ENCODE measurements at regions of chr17 and their contacts with region 1.

Region 1: DNA sequence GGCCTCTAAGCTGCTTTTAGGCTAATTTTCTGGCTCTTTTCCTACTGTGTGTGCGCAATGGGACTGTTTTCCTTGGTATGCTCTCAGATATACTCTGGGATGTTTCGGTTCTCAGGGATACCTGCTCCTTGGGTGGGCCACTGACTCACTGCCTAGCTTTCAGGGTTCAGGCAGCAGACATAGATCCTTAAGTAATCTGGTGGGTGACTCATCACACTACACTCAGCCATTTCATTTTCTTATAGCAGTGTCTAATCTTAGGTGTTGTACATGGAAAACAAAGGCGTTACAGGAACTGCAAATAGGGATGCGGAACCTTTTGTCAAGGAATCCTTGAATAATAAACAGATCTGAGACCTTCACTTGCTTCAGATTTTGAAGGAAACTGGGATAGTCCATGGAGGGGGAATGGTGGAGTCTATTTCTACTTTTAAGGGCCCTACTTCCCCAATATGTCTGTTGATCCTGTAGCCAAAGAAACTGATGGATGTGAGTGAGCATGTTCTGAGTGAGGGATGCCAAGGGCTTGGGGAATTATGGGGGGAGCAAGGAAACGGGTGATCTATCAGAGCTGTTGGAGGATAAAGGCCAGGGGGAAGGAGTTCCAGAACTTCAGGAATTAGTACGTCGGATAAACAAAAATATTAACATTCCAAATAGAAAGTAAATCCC is 40.7 kb upstream of the TEKT1 start:
- DNase-seq: no peak
- ATAC-seq: no peak
- H3K4me3 ChIP-seq: no peak overlapping the region
- H3K27ac ChIP-seq: no peak overlapping the region
- H3K4me1 ChIP-seq: no peaks in the 10 kb centered on the region
- H3K27me3 ChIP-seq: no peaks in the 10 kb centered on the region
- CTCF ChIP-seq: no peak
- EP300 ChIP-seq: no peak
- POLR2A ChIP-seq: no peak
- RAD21 ChIP-seq: no peak

Region 2: GRCh38 chr17:6936370-6937028 is 64.2 kb after region 1 on chr17:
- CTCF ChIA-PET with region 1: no interaction called
- POLR2A ChIA-PET with region 1: no interaction called
- RAD21 ChIA-PET with region 1: no interaction called
- SMC1A ChIA-PET with region 1: no interaction called
- in situ Hi-C with region 1: no loop called
- intact Hi-C with region 1: loop called (anchors 10 kb)
- DNase-seq: no peak
- ATAC-seq: peak; percentile 92
- H3K4me3 ChIP-seq: peak overlapping the region; percentile 44; the same call in 1 of the 2 replicates
- H3K27ac ChIP-seq: no peak overlapping the region
- H3K4me1 ChIP-seq: peaks cover 2% of the 10 kb centered on the region; the same call in 1 of the 2 replicates
- H3K27me3 ChIP-seq: no peaks in the 10 kb centered on the region
- CTCF ChIP-seq: no peak
- EP300 ChIP-seq: no peak
- POLR2A ChIP-seq: no peak
- RAD21 ChIP-seq: no peak

Measured in GM12878 (cell line).